Activated T-helper 2 cell treated with anti-CD3 and anti-CD28 coated beads, Interferon-gamma antibody, Interleukin-2, Interleukin-4, amounts not matched to agents 10 μg/mL and 5 μg/mL and 100 μg/mL, durations not matched to agents 14 hours and 24 hours and 36 hours (primary cell): ENCODE measurements at regions of chr14 and their contacts with region 1.

Region 1: DNA sequence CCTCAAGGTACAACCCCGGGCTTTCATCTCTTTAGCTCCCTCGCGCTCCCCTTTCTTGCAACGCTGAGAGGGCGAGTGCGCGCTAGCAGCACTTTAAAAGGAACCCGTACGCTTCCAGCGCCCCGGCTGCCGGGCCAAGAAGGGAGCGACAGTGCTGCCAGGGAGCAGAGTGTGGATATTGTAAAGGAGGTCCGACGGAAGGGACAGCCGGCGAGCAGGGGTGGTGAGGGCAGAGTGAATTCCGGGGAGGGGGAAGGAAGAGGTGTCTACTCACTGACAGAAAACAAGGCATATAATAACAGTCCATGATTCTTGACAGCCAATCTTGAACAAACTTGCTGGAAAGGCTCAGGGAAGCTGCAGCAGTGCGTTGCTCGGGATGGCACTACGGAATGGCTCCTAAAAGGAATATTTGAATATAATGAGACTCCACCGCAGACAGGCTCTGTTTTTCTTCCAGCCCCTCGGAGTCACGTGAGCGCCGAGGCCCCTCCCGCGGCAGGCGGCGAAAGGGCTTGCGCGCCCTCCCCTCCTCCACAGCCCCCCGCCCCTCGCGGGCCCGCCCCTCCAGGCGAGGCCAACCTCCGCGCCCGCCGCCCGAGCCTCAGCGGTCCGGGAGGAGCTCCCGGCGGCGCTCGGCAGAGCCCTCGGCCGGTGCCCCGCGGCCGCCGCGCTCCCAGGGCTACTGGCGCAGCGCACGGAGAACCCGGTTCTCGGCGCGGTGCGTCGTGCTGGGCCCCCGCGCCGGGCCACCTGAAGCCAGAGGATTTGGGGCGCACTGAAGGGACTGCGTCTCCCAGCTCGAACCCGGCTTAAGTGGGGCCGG is 3.4 kb downstream of the BMP4 start:
- DNase-seq: peak; percentile 10
- H3K4me3 Mint-ChIP-seq: peak overlapping the region; percentile 81
- H3K27ac Mint-ChIP-seq: no peak overlapping the region
- H3K4me1 Mint-ChIP-seq: peaks cover 27% of the 10 kb centered on the region
- H3K27me3 Mint-ChIP-seq: peaks cover 81% of the 10 kb centered on the region

Region 2: DNA sequence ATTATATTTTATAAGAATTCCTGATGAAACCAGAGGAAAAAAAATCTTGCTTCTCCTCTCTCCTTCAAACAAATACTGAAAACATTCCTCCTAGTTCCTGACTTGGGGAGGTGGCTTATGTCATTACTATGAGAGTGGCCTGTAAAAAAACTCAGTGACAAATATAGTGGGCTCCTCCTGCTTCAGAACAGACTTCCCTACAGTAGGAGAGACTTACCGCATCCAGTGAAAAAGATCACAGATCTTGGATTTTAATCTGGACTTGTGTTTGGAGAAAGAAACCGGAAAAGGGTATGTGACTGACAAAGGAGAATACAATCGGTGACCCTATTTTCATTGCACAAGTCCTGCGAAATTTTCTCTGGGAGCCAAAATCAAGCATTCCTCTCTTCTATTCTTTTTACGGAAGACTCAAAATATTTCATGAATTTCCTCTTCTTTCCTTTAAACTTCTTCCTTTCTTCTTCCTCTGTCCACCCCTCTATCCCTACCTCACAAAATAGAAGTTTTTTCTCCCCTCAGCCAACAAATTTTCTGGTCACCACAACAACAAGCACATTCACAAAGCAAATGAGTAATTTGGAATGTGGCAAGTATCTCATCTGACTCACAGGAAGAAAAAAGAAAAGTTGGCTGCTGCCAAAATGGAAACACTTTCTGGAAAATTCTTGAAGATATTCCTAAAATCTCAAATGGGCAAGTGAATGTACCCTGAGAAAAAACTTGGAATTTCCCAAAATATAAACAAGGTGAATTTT is 258.5 kb after region 1 on chr14:
- intact Hi-C with region 1: loop called (anchors 10 kb)
- DNase-seq: no peak
- H3K4me3 Mint-ChIP-seq: no peak overlapping the region
- H3K27ac Mint-ChIP-seq: no peak overlapping the region
- H3K4me1 Mint-ChIP-seq: no peaks in the 10 kb centered on the region
- H3K27me3 Mint-ChIP-seq: peaks cover 25% of the 10 kb centered on the region